ENCODE measurements at regions of chr6 and their contacts with region 1.

Region 1: DNA sequence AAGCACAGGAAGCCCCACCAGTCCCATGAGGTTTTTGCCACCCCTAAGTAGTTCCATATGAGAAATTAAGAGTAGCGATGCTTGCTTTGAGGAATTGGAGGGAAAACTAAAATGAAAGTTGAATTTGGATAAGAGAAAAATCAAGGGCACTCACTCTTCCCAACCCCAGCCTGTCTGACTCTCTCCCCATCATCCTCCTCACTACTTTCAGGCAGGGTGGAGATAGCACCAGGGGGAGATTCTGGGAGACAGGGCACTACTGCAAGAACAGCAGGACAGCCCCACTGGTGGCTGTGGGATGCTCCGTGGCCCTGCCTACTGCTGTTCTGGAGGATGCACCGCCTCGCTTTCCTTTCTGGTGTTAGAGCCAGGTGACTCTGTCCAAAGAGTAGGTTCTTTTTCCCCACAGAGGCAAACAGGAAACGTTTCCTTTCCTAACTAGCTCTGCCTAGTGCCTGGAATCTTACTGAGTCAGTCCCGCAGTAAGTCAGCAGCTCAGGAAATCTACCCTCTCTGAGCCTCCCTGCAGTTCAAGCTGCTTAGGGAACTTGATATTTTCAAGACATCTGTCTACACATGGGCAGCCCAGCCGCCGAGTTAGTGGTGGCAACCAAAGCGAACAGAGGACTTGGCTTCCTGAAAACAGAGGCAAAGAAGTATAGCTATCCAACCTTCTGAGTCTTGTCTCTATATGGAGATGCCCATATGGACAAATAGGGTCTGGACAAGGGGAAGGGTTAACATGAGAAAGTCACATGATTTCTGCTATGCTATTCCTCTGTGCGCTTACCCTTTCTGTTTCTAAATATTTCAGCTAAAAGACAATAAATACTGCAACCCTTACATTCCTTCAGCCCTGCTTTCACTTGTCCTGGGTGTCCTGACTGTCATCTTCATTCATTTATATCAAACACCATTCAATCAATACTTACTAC is 11.4 kb downstream of the HLA-E start:
- DNase-seq: no peak
- H3K4me3 ChIP-seq: peak overlapping the region; percentile 50
- H3K4me3 Mint-ChIP-seq: peak overlapping the region; percentile 11 to 71 (median 65)
- H3K27ac ChIP-seq: no peak overlapping the region
- H3K27ac Mint-ChIP-seq: peak overlapping the region in 6 of 8 donors; percentile 6 to 76 (median 66)
- H3K4me1 ChIP-seq: peaks cover 28% of the 10 kb centered on the region
- H3K4me1 Mint-ChIP-seq: peaks cover 30 to 44% (median 37%) of the 10 kb centered on the region in 3 donors
- H3K27me3 ChIP-seq: no peaks in the 10 kb centered on the region
- H3K27me3 Mint-ChIP-seq: no peaks in the 10 kb centered on the region

Region 2: GRCh38 chr6:30515932-30516753 is 15.5 kb after region 1 on chr6:
- CTCF ChIA-PET with region 1: interaction called, 6 read pairs
- POLR2A ChIA-PET with region 1: interaction called, 94 read pairs
- DNase-seq: peak; percentile 79 to 95 (median 95)
- H3K4me3 ChIP-seq: peak overlapping the region; percentile 58
- H3K4me3 Mint-ChIP-seq: peak overlapping the region; percentile 75 to 93 (median 90)
- H3K27ac ChIP-seq: peak overlapping the region; percentile 83
- H3K27ac Mint-ChIP-seq: peak overlapping the region; percentile 85 to 99 (median 98)
- H3K4me1 ChIP-seq: peaks cover 50% of the 10 kb centered on the region
- H3K4me1 Mint-ChIP-seq: peaks cover 52 to 65% (median 63%) of the 10 kb centered on the region in 3 donors
- H3K27me3 ChIP-seq: no peaks in the 10 kb centered on the region
- H3K27me3 Mint-ChIP-seq: no peaks in the 10 kb centered on the region

Region 3: GRCh38 chr6:30533460-30534294 is 33.0 kb after region 1 on chr6:
- CTCF ChIA-PET with region 1: interaction called, 73 read pairs
- POLR2A ChIA-PET with region 1: interaction called, 7 read pairs
- DNase-seq: peak in 1 of 5 donors; percentile 32
- H3K4me3 ChIP-seq: peak overlapping the region; percentile 6
- H3K4me3 Mint-ChIP-seq: peak overlapping the region; percentile 70 to 95 (median 93)
- H3K27ac ChIP-seq: no peak overlapping the region
- H3K27ac Mint-ChIP-seq: peak overlapping the region; percentile 74 to 98 (median 94)
- H3K4me1 ChIP-seq: peaks cover 39% of the 10 kb centered on the region
- H3K4me1 Mint-ChIP-seq: peaks cover 32 to 43% (median 42%) of the 10 kb centered on the region in 3 donors
- H3K27me3 ChIP-seq: no peaks in the 10 kb centered on the region
- H3K27me3 Mint-ChIP-seq: no peaks in the 10 kb centered on the region